ENCODE measurements at regions of chr5 and their contacts with region 1.

Region 1: DNA sequence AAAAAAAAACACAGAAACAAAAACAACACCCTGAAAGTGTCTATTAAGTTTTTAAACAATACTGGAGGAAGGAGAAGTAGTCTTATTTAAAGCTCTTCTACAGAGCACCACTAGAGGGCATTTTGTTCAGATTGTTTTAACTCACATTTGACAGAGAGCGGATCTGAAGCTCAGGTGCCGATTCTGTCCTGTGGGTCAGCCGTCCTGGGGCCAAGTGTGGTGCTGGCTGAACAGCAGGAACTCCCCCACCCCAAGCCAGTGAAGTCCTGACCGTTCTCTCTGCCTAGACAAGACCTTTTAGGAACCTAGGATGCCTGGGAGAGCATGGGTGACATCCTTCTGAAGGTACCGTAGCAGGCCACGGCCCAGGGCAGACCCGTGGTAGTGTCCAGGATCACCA is 3.9 kb downstream of the EXOC3 start:
- DNase-seq: peak; percentile 60 to 72
- ATAC-seq: peak in 1 of 2 experiments; percentile 60; a peak in 3 of 6 replicates
- H3K4me3 ChIP-seq: no peak overlapping the region
- H3K27ac ChIP-seq: no peak overlapping the region
- H3K4me1 ChIP-seq: peaks cover 13% of the 10 kb centered on the region
- CTCF ChIP-seq: peak; percentile 57
- EP300 ChIP-seq: no peak
- POLR2A ChIP-seq: no peak
- RAD21 ChIP-seq: peak; percentile 18 to 50; a peak in 2 of 5 replicates

Region 2: GRCh38 chr5:317086-317811 is 129.6 kb before region 1 on chr5:
- CTCF ChIA-PET with region 1: interaction called, 17 read pairs
- POLR2A ChIA-PET with region 1: interaction called, 4 read pairs
- DNase-seq: peak; percentile 82 to 88
- ATAC-seq: peak; percentile 75 to 90
- H3K4me3 ChIP-seq: no peak overlapping the region
- H3K27ac ChIP-seq: peak overlapping the region; percentile 33 to 87; a peak in 4 of 6 replicates
- H3K4me1 ChIP-seq: peaks cover 24% of the 10 kb centered on the region
- CTCF ChIP-seq: peak; percentile 69
- EP300 ChIP-seq: no peak
- POLR2A ChIP-seq: no peak
- RAD21 ChIP-seq: peak; percentile 81 to 86

Region 3: GRCh38 chr5:458547-459353 is 11.9 kb after region 1 on chr5:
- CTCF ChIA-PET with region 1: interaction called, 30 read pairs
- POLR2A ChIA-PET with region 1: no interaction called
- DNase-seq: peak in 1 of 2 experiments; percentile 30
- ATAC-seq: peak in 1 of 2 experiments; percentile 51; a peak in 2 of 6 replicates
- H3K4me3 ChIP-seq: no peak overlapping the region
- H3K27ac ChIP-seq: no peak overlapping the region
- H3K4me1 ChIP-seq: peaks cover 4% of the 10 kb centered on the region; the same call in 1 of the 3 replicates
- CTCF ChIP-seq: no peak
- EP300 ChIP-seq: no peak
- POLR2A ChIP-seq: no peak
- RAD21 ChIP-seq: no peak

Region 4: GRCh38 chr5:505951-506525 is 59.2 kb after region 1 on chr5:
- CTCF ChIA-PET with region 1: no interaction called
- POLR2A ChIA-PET with region 1: no interaction called
- DNase-seq: no peak
- ATAC-seq: peak in 1 of 2 experiments; percentile 45; a peak in 3 of 6 replicates
- H3K4me3 ChIP-seq: peak overlapping the region; percentile 36
- H3K27ac ChIP-seq: peak overlapping the region in 1 of 2 experiments; percentile 53; a peak in 3 of 6 replicates
- H3K4me1 ChIP-seq: peaks cover 9% of the 10 kb centered on the region; the same call in 2 of the 3 replicates
- CTCF ChIP-seq: no peak
- EP300 ChIP-seq: no peak
- POLR2A ChIP-seq: no peak
- RAD21 ChIP-seq: no peak

Region 5: GRCh38 chr5:902129-902916 is 455.5 kb after region 1 on chr5:
- CTCF ChIA-PET with region 1: interaction called, 11 read pairs
- POLR2A ChIA-PET with region 1: no interaction called
- DNase-seq: no peak
- ATAC-seq: no peak
- H3K4me3 ChIP-seq: no peak overlapping the region
- H3K27ac ChIP-seq: no peak overlapping the region
- H3K4me1 ChIP-seq: no peaks in the 10 kb centered on the region
- CTCF ChIP-seq: no peak
- EP300 ChIP-seq: no peak
- POLR2A ChIP-seq: no peak
- RAD21 ChIP-seq: no peak